Common myeloid progenitor, CD34-positive (primary cell): ENCODE measurements at regions of chr5 and their contacts with region 1.

Region 1: GRCh38 chr5:146051678-146052077 is 53.7 kb downstream of the PLAC8L1 start:
- DNase-seq: no peak
- H3K4me3 ChIP-seq: no peak overlapping the region
- H3K27ac ChIP-seq: no peak overlapping the region
- H3K4me1 ChIP-seq: peaks cover 0 to 12% (median 6%) of the 10 kb centered on the region in 4 experiments
- H3K27me3 ChIP-seq: peaks cover 0 to 2% (median 0%) of the 10 kb centered on the region in 5 experiments

Region 2: GRCh38 chr5:146030658-146031057 is 21.0 kb before region 1 on chr5:
- CTCF ChIA-PET with region 1: no interaction called
- POLR2A ChIA-PET with region 1: no interaction called
- DNase-seq: no peak
- H3K4me3 ChIP-seq: no peak overlapping the region
- H3K27ac ChIP-seq: no peak overlapping the region
- H3K4me1 ChIP-seq: peaks cover 0 to 7% (median 1%) of the 10 kb centered on the region in 4 experiments
- H3K27me3 ChIP-seq: no peaks in the 10 kb centered on the region

Region 3: DNA sequence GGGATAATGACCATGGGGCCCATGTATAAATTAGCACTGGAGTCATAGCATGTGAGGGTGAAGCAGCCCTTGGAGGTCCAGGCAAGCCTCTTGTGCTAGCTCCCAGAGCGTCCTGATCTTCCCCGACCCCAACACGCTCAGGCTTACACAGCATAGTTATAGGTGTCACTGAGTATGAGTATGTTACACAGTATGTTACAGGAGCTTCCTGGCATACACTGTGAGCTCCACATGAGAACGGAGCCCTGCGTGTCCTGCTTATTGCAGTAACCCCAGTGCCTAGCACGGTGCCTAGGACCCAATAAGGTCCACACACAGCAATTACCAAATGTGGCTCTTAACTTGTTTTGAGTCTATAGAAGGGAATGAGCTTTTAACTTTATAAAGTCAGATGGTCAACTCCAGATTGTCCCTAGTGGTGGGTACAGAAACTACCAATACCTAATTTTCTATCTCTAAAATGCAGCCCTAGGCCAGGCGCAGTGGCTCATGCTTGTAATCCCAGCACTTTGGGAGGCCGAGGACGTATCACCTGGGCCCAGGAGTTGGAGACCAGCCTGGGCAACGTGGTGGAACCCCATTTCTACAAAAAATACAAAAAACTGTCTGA is 10.4 kb before region 1 on chr5:
- CTCF ChIA-PET with region 1: interaction called, 10 read pairs
- POLR2A ChIA-PET with region 1: no interaction called
- DNase-seq: peak in 2 of 3 donors; percentile 24 to 42
- H3K4me3 ChIP-seq: no peak overlapping the region
- H3K27ac ChIP-seq: no peak overlapping the region
- H3K4me1 ChIP-seq: peaks cover 0 to 23% (median 12%) of the 10 kb centered on the region in 4 experiments
- H3K27me3 ChIP-seq: no peaks in the 10 kb centered on the region